ENCODE measurements at regions of chr3 and their contacts with region 1.

Region 1: DNA sequence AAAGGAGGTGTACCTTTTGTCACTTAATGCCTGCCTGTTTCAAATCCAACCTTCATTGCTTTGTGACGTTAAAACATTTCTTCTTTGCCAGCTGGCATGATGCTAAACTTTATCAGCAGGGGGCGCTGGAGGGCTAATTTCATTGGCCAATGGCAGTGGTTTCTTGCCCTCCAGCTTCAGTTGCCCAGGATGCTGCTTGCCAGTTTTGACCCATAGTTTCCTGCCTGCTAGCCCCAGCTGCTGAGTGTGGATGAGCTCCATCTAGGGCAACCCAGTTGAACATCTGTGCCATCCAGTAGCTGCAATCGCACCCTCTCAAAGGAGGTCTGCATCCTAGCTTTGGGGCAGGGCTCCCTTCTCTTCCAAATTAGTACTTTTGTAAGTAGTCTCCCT is 22.1 kb downstream of the ACKR2 start:
- DNase-seq: peak; percentile 88
- H3K4me3 Mint-ChIP-seq: no peak overlapping the region
- H3K27ac Mint-ChIP-seq: no peak overlapping the region
- H3K4me1 Mint-ChIP-seq: no peaks in the 10 kb centered on the region
- H3K27me3 Mint-ChIP-seq: peaks cover 5% of the 10 kb centered on the region

Region 2: DNA sequence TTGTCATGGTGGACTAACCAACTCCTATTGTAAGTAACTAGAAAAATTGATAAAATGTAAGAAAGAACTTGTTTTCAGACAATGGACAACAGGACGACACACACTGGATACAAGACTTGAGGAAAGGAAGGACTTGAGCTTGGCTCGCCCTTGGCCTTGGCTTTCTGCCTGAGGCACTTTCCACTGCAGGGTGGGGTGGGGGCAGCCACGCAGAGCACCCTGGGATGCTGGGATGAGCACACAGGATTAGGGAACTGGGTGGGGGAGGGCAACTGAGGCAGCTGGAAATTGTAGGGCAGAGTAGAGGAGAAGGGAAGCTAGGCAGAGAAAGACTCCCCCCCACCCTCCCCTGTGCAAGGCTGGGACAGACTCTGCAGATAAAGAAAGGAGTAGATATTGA is 103.3 kb before region 1 on chr3:
- CTCF ChIA-PET with region 1: no interaction called
- POLR2A ChIA-PET with region 1: no interaction called
- intact Hi-C with region 1: no loop called
- DNase-seq: no peak
- H3K4me3 Mint-ChIP-seq: no peak overlapping the region
- H3K27ac Mint-ChIP-seq: no peak overlapping the region
- H3K4me1 Mint-ChIP-seq: no peaks in the 10 kb centered on the region
- H3K27me3 Mint-ChIP-seq: no peaks in the 10 kb centered on the region

Region 3: DNA sequence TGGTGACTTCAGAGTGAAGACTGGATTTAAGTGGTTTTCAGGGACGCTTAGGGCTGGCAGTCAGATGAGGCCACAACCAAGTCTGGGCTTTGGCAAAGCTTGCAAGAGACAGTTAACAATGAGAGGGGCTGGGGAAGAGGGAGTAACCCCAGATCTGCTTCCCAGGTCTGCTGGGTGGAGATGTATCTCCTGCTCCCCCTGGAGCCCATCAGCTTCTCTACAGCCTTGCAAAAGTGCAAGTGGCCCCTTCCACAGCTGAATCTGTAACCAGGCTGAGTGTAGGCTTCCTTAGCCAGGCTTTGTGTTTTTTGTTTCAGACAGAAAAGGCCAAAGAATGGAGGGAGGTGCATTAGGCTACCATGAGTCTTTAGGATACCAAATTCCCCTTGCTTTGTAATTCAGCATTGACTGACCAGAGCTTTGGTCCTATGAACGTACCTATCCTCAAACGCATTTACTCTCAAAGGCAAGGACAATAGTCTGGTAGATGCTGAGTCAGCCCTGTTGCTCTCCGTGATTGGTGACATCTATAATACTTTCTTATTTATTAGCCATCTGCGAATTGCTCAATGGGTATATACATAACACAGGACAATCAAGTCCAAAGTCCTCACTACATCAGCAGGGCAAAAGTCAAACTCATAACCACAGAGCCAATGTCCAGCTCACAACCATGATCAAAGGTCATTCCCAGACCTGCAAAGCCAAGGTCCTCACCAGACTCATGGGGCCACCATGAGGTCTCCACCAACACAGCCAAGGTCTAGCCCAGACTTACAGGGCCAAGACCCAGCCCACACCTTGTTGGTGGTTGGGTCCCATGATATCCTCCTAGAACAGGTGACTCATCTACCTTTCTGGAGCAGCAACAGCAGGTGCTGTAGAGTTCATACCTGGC is 75.4 kb before region 1 on chr3:
- CTCF ChIA-PET with region 1: no interaction called
- POLR2A ChIA-PET with region 1: no interaction called
- intact Hi-C with region 1: no loop called
- DNase-seq: peak; percentile 24
- H3K4me3 Mint-ChIP-seq: no peak overlapping the region
- H3K27ac Mint-ChIP-seq: no peak overlapping the region
- H3K4me1 Mint-ChIP-seq: no peaks in the 10 kb centered on the region
- H3K27me3 Mint-ChIP-seq: no peaks in the 10 kb centered on the region

Region 4: GRCh38 chr3:42780892-42781700 is 50.2 kb before region 1 on chr3:
- CTCF ChIA-PET with region 1: interaction called, 9 read pairs
- POLR2A ChIA-PET with region 1: no interaction called
- intact Hi-C with region 1: loop called (anchors 1 kb)
- DNase-seq: no peak
- H3K4me3 Mint-ChIP-seq: no peak overlapping the region
- H3K27ac Mint-ChIP-seq: no peak overlapping the region
- H3K4me1 Mint-ChIP-seq: no peaks in the 10 kb centered on the region
- H3K27me3 Mint-ChIP-seq: no peaks in the 10 kb centered on the region

Region 5: GRCh38 chr3:42819351-42819965 is 11.9 kb before region 1 on chr3:
- CTCF ChIA-PET with region 1: interaction called, 11 read pairs
- POLR2A ChIA-PET with region 1: no interaction called
- intact Hi-C with region 1: no loop called
- DNase-seq: no peak
- H3K4me3 Mint-ChIP-seq: no peak overlapping the region
- H3K27ac Mint-ChIP-seq: no peak overlapping the region
- H3K4me1 Mint-ChIP-seq: no peaks in the 10 kb centered on the region
- H3K27me3 Mint-ChIP-seq: no peaks in the 10 kb centered on the region

Region 6: GRCh38 chr3:42880601-42881451 is 49.5 kb after region 1 on chr3:
- CTCF ChIA-PET with region 1: interaction called, 24 read pairs
- POLR2A ChIA-PET with region 1: no interaction called
- intact Hi-C with region 1: loop called (anchors 1 kb)
- DNase-seq: peak; percentile 93
- H3K4me3 Mint-ChIP-seq: peak overlapping the region; percentile 76
- H3K27ac Mint-ChIP-seq: no peak overlapping the region
- H3K4me1 Mint-ChIP-seq: peaks cover 10% of the 10 kb centered on the region
- H3K27me3 Mint-ChIP-seq: peaks cover 1% of the 10 kb centered on the region